ENCODE measurements at regions of chr1 and their contacts with region 1.

Region 1: DNA sequence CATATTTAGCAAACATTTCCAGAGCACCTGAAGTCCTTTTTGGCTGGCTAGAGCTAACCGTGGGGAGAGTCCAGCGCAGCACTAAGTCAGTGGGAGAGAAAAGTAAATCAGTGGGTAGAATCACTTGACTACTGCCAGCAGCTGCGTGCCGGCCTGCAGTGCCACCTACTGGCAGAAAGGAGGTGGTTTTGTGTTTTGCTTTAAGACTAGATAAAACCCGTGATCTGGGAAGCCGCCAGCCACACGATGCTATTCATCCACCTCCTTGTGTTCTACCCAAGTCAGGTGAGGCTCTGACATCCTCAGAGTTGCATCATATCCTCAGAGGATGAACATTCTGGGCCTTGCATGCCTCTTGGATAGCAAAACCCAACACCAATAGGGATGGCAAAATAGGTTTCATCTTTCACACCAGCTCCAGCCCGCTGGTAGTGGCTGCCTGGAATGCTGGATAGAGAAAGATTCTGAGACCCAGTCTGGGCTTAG is 14.1 kb upstream of the HEYL start:
- DNase-seq: peak; percentile 58
- H3K4me3 ChIP-seq: no peak overlapping the region; the same call in 1 of the 2 replicates
- H3K27ac ChIP-seq: no peak overlapping the region
- H3K27me3 ChIP-seq: peaks cover 44% of the 10 kb centered on the region
- CTCF ChIP-seq: peak; percentile 93

Region 2: GRCh38 chr1:39478126-39478915 is 175.3 kb before region 1 on chr1:
- CTCF ChIA-PET with region 1: no interaction called
- POLR2A ChIA-PET with region 1: no interaction called
- DNase-seq: no peak
- H3K4me3 ChIP-seq: no peak overlapping the region
- H3K27ac ChIP-seq: no peak overlapping the region
- H3K27me3 ChIP-seq: no peaks in the 10 kb centered on the region
- CTCF ChIP-seq: no peak

Region 3: DNA sequence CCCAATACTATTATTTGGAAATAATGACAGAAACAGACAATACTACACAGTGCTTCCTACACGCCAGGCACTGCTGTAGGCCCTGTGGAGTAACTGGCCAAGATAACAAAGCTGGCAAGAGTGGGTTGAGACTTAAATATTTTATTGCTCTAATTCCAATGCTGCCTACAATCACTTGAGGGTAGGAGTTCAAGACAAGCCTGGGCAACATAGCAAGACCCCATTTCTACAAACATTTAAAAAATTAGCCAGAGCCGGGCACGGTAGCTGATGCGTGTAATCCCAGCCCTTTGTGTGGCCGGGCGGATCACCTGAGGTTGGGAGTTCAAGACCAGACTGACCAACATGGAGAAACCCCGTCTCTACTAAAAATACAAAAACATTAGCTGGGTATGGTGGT is 67.7 kb before region 1 on chr1:
- CTCF ChIA-PET with region 1: interaction called, 10 read pairs
- POLR2A ChIA-PET with region 1: no interaction called
- DNase-seq: no peak
- H3K4me3 ChIP-seq: no peak overlapping the region
- H3K27ac ChIP-seq: no peak overlapping the region
- H3K27me3 ChIP-seq: peaks cover 5% of the 10 kb centered on the region
- CTCF ChIP-seq: no peak

Region 4: GRCh38 chr1:39596163-39596562 is 57.4 kb before region 1 on chr1:
- CTCF ChIA-PET with region 1: interaction called, 13 read pairs
- POLR2A ChIA-PET with region 1: no interaction called
- DNase-seq: no peak
- H3K4me3 ChIP-seq: no peak overlapping the region
- H3K27ac ChIP-seq: no peak overlapping the region
- H3K27me3 ChIP-seq: peaks cover 38% of the 10 kb centered on the region
- CTCF ChIP-seq: no peak

Region 5: DNA sequence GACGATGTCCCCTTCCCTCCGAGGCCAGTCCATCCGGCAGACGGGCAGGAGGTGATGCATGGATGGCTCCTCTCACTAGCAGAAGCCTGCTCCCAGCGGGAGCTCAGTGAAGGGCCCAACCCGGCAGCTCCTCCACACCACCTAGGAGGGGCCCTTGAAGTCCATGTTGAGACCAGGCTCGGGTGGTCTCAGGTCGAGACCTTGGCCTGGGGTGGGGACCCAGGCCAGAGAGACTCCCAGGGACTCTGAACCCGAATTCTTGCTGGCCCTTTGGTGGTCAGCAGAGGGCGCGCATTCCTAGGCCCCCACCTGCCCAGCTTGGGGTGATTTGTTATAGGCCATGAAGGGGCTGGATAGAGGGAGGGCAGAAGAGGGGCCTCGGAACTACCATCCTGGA is 19.0 kb after region 1 on chr1:
- CTCF ChIA-PET with region 1: interaction called, 128 read pairs
- POLR2A ChIA-PET with region 1: no interaction called
- DNase-seq: no peak
- H3K4me3 ChIP-seq: peak overlapping the region; percentile 45; the same call in 1 of the 2 replicates
- H3K27ac ChIP-seq: no peak overlapping the region
- H3K27me3 ChIP-seq: peaks cover 74% of the 10 kb centered on the region
- CTCF ChIP-seq: peak; percentile 56

Region 6: DNA sequence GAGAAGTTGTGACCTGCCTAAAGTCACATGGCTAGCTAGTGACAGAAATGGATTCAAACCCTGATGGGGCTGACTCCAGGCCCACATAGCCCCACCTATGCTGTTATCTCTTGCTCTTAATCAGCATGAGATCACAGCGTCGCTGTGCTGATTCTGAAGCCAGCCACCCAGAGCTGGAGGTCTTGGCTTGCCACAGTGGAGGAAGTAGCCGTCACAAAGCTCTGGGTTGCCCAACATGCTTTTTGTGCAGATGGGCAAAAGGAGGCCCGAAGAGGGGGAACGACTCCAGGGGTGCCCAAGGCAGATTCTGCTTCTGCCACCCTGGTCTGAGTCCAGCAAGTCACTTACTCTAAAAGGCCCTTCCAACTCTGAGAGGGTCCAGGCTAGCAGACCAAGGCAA is 286.7 kb after region 1 on chr1:
- CTCF ChIA-PET with region 1: no interaction called
- POLR2A ChIA-PET with region 1: no interaction called
- DNase-seq: no peak
- H3K4me3 ChIP-seq: no peak overlapping the region
- H3K27ac ChIP-seq: no peak overlapping the region
- H3K27me3 ChIP-seq: peaks cover 35% of the 10 kb centered on the region
- CTCF ChIP-seq: no peak